HEK293 (cell line): ENCODE measurements at regions of chr5 and their contacts with region 1.

Region 1: GRCh38 chr5:34452170-34452830 is 203.8 kb upstream of the RAI14 start:
- H3K4me3 ChIP-seq: no peak overlapping the region
- H3K27ac ChIP-seq: no peak overlapping the region
- H3K4me1 ChIP-seq: no peaks in the 10 kb centered on the region
- CTCF ChIP-seq: no peak

Region 2: DNA sequence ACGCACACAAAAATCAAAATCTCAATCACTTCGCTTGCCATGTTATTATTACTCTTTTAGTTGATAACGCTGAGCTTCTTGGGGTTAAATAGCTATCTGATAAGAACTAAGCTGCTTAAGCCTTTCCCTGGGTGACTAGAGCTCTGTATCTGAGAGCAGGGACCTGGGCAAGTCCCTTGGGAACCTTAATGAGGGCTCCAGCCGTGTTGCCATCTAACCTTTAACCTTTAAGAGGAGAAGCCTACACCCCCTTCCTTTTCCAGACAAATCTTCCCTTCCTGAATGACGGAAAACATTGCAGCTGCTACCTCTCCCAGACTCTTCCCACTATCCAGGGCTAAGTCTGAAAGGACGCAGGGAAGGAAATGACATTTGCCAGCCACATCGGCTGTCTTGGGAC is 12.7 kb before region 1 on chr5:
- CTCF ChIA-PET with region 1: interaction called, 14 read pairs
- POLR2A ChIA-PET with region 1: no interaction called
- H3K4me3 ChIP-seq: no peak overlapping the region
- H3K27ac ChIP-seq: no peak overlapping the region
- H3K4me1 ChIP-seq: no peaks in the 10 kb centered on the region
- CTCF ChIP-seq: no peak

Region 3: GRCh38 chr5:34464830-34465229 is 12.5 kb after region 1 on chr5:
- CTCF ChIA-PET with region 1: interaction called, 20 read pairs
- POLR2A ChIA-PET with region 1: no interaction called
- H3K4me3 ChIP-seq: no peak overlapping the region
- H3K27ac ChIP-seq: no peak overlapping the region
- H3K4me1 ChIP-seq: no peaks in the 10 kb centered on the region
- CTCF ChIP-seq: no peak